Heart right ventricle (tissue), 16 donors: ENCODE measurements at regions of chr1 and their contacts with region 1.

Region 1: GRCh38 chr1:150235852-150236613 is at the start of gene ANP32E:
- DNase-seq: peak; percentile 91 to 97
- ATAC-seq: peak; percentile 95 to 98 (median 97)
- H3K4me3 ChIP-seq: peak within 1 kb of the TSS; percentile 80 to 97 (median 90)
- H3K27ac ChIP-seq: peak within 1 kb of the TSS; percentile 87 to 100 (median 98)
- H3K4me1 ChIP-seq: peaks cover 0 to 20% (median 15%) of the 10 kb centered on the region in 9 donors
- H3K27me3 ChIP-seq: no peaks in the 10 kb centered on the region
- CTCF ChIP-seq: peak in 2 of 9 donors; percentile 7 to 25
- total RNA-seq, gene ANP32E: 23.7 to 58.2 (median 41.6) TPM

Region 2: GRCh38 chr1:150213170-150214098 is 22.6 kb before region 1 on chr1:
- intact Hi-C with region 1: loop called in 1 of 10 experiments (anchors 2 kb)
- DNase-seq: peak; percentile 94 to 96
- ATAC-seq: peak; percentile 98 to 100 (median 100)
- H3K4me3 ChIP-seq: peak overlapping the region in 9 of 10 donors; percentile 31 to 56 (median 47)
- H3K27ac ChIP-seq: peak overlapping the region; percentile 26 to 92 (median 83)
- H3K4me1 ChIP-seq: peaks cover 0 to 13% (median 9%) of the 10 kb centered on the region in 9 donors
- H3K27me3 ChIP-seq: no peaks in the 10 kb centered on the region
- CTCF ChIP-seq: peak in 6 of 9 donors; percentile 15 to 58 (median 44)